Lower lobe of right lung (tissue), 2 donors: ENCODE measurements at regions of chr10 and their contacts with region 1.

Region 1: GRCh38 chr10:11724938-11725776 is 17.0 kb upstream of the ECHDC3 start:
- DNase-seq: no peak
- ATAC-seq: peak; percentile 60 to 88
- H3K4me3 ChIP-seq: no peak overlapping the region
- H3K27ac ChIP-seq: no peak overlapping the region
- H3K4me1 ChIP-seq: no peaks in the 10 kb centered on the region
- H3K27me3 ChIP-seq: no peaks in the 10 kb centered on the region
- CTCF ChIP-seq: peak; percentile 75

Region 2: DNA sequence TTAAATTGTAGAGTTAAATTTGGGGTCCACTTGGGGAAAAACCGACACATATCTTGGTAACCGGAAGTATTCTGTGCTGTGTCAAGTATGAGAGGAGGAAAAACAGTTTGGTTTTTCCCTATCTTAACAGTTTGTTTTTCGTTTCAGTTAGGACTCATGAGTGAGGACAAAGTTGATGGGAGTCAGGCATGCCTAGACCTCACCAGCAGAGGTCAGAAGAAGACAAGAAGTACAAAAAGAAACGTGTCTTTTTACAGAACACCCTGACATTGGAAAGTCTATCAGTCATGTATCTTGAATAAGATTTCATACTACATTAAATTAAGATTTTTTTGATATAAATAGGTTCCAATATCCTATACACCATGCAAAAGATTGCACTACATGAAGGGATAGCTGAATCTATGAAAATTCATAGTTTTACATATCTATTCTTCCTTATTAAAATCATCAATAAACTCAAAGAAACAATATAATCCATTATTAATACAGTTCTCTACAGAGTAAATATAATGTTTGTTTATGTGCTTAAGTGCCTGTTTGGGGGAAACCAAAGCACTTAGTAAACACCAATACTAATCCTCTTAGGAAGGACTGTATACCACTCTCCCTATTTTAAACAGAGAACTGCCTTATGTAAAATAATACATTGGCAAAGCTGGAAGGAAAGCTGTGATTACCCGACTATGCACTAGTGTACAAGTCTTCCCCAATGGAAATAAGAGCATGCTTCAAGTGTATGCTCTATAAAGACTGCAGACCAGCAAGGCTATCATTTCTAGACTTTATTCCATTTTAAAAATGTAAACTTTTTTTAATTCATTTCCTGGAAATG is 209.3 kb before region 1 on chr10:
- intact Hi-C with region 1: loop called (anchors 10 kb)
- DNase-seq: no peak
- ATAC-seq: peak; percentile 86 to 89
- H3K4me3 ChIP-seq: no peak overlapping the region
- H3K27ac ChIP-seq: no peak overlapping the region
- H3K4me1 ChIP-seq: peaks cover 15% of the 10 kb centered on the region
- H3K27me3 ChIP-seq: no peaks in the 10 kb centered on the region
- CTCF ChIP-seq: peak; percentile 83